Caco-2 (cell line): ENCODE measurements at regions of chr20 and their contacts with region 1.

Region 1: DNA sequence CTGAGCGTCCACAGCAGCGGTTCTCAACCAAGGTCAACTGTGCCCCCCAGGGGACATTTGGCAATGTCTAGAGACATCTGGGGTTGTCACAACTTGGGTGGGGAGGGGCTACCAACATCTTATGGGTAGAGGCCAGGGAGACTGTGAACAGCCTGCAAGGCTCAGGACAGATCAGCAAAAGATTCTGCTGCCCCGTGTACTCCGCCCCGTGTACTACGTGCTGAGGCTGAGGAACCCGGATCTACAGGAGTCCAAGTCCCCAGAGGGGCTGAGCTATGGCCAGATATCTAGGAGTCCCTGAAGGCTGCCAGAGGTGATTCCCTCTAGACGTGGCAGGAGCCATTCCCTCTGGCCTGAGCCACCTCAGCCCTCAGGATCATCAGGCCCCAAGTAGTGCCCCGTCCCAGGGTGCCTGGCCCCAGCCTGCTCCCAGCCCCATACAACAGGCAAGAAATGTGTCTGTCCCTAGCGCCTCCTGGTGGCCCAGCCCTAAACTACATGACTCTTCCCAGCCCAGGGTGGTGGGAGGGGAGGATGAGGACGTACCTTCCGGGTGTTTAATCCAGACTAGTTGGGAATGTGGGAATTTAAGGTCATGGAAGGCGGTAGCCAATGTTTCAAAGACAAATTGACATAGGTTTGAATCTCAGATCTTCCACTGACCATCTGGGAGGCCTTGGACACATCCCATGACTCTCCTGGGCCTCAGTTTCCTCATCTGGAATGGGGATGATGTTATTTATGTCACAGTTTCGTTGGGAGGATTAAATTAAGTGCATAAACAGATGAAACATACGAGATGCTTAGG is 49.5 kb upstream of the PTPN1 start:
- DNase-seq: peak; percentile 93 to 96
- H3K4me3 ChIP-seq: no peak overlapping the region
- H3K4me3 Mint-ChIP-seq: no peak overlapping the region
- H3K27ac Mint-ChIP-seq: peak overlapping the region; percentile 34
- H3K4me1 ChIP-seq: peaks cover 33% of the 10 kb centered on the region
- H3K4me1 Mint-ChIP-seq: peaks cover 31% of the 10 kb centered on the region
- H3K27me3 ChIP-seq: no peaks in the 10 kb centered on the region
- H3K27me3 Mint-ChIP-seq: no peaks in the 10 kb centered on the region
- CTCF ChIP-seq: peak; percentile 99 to 100

Region 2: DNA sequence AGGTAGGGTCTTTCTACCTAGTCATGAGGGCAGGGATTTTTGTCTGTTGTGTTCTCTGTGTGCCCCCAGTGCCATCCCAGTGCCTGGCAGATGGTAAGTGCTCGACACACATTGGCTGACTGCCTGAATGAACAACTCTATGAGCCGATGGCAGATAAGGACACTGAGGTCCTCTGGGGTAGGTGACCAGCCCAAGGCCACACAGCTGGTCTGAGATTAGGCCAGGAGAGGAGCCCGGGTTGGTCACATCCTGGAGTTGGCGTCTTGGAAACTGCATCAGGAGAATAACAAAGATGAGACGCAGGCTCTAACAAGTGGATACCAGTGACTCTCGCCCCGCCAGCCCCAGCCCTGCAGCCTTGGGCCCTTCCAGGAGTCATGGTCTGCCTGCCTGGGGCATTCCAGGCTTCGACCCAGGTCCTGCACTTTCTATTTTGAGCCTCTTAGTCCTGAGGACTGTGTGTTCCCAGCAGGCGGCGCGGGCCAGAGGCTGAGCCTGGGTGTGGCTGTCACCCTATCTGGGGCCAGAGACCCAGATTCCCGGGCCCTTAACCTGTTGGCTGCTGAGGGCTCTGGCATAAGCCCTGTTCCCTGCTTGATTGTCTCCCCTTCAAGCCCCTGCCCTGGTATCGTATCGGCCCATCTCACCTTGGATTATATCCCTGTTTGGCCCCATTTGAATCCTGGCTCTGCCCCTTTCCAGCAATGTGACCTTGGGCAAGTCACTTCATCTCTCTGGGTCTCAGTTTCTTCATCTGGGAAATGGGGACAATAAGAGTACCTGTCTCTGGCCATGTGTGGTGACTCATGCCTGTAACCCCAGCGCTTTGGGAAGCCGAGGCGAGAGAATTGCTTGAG is 181.8 kb before region 1 on chr20:
- CTCF ChIA-PET with region 1: no interaction called
- POLR2A ChIA-PET with region 1: no interaction called
- intact Hi-C with region 1: loop called (anchors 5 kb)
- DNase-seq: peak; percentile 64 to 82
- H3K4me3 ChIP-seq: no peak overlapping the region
- H3K4me3 Mint-ChIP-seq: no peak overlapping the region
- H3K27ac Mint-ChIP-seq: peak overlapping the region; percentile 5
- H3K4me1 ChIP-seq: peaks cover 34% of the 10 kb centered on the region
- H3K4me1 Mint-ChIP-seq: peaks cover 14% of the 10 kb centered on the region
- H3K27me3 ChIP-seq: no peaks in the 10 kb centered on the region
- H3K27me3 Mint-ChIP-seq: no peaks in the 10 kb centered on the region
- CTCF ChIP-seq: peak; percentile 19 to 49

Region 3: DNA sequence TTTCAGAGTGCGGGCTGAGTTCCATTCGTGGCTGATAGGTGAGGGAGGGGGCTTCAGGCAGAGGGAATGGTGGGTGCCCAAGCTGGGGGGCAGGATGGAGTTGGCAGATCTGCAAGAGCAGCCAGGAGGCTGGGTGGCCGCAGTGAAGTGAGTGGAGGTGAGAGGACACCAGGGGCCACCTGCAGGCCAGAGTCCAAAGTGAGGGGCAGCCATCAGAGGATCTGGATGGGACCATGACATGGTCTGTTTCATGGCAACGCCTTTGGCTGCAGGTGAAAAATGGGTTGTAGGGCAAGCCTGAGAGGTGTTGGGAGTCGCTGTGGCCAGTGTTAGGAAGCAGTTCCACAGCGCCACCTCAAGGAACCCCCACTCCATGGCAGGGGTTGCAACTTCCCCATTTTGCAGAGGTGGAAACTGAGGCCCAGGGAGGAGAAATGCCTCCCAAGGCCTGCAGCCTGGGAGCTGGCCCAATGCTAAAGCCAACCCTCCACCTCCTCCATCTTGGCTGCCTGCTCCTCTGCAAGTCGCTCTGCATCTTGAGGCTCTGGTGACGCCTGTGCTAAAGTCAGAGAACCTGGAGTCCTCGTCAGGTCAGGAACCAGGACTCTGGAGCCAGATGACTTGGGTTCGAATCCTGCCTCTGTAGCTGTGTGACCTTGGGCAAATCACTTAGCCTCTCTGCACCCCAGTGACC is 116.3 kb before region 1 on chr20:
- CTCF ChIA-PET with region 1: no interaction called
- POLR2A ChIA-PET with region 1: no interaction called
- intact Hi-C with region 1: no loop called
- DNase-seq: peak; percentile 54 to 69
- H3K4me3 ChIP-seq: no peak overlapping the region
- H3K4me3 Mint-ChIP-seq: no peak overlapping the region
- H3K27ac Mint-ChIP-seq: no peak overlapping the region
- H3K4me1 ChIP-seq: no peaks in the 10 kb centered on the region
- H3K4me1 Mint-ChIP-seq: no peaks in the 10 kb centered on the region
- H3K27me3 ChIP-seq: no peaks in the 10 kb centered on the region
- H3K27me3 Mint-ChIP-seq: no peaks in the 10 kb centered on the region
- CTCF ChIP-seq: peak; percentile 28 to 44

Region 4: DNA sequence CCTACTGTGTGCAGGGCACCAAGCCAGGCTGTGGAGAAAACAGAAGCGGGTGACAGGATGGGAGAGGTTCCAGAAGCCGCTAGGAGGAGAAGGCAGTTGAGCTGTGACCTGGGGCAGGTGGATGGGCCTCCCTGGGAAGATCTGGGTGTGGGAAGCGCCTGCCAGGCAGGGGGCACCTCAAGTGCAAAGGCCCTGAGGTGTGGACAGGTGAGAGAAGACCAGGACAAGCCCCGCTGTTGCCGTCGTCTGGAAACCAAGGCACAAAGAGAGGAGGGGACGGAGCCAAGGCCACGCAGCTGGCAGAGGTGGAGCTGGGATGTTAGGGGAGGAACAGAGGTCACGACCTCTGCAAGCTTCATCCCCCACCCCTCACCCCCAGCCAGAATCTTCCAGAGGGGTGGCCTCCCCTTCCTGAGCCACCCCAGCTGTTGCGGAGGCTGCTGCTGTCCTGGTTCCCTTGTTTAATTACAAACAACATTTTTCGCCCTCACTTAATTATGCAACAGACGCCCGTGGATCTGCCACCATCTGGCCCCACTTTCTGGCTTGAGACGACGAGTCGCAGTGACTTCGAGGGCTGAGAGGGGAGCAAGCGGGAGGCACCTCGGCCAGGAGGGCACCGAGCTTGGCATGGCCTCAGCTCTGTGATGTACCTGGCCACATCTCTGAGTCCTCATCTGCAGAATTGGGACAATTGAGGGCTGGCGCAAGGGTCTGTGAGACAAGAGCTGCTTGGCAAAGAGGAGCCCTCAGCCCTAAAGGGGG is 104.2 kb before region 1 on chr20:
- CTCF ChIA-PET with region 1: interaction called, 4 read pairs
- POLR2A ChIA-PET with region 1: no interaction called
- intact Hi-C with region 1: loop called (anchors 1 kb)
- DNase-seq: no peak
- H3K4me3 ChIP-seq: no peak overlapping the region
- H3K4me3 Mint-ChIP-seq: no peak overlapping the region
- H3K27ac Mint-ChIP-seq: no peak overlapping the region
- H3K4me1 ChIP-seq: peaks cover 41% of the 10 kb centered on the region
- H3K4me1 Mint-ChIP-seq: peaks cover 37% of the 10 kb centered on the region
- H3K27me3 ChIP-seq: no peaks in the 10 kb centered on the region
- H3K27me3 Mint-ChIP-seq: no peaks in the 10 kb centered on the region
- CTCF ChIP-seq: no peak

Region 5: GRCh38 chr20:50399917-50400704 is 60.6 kb before region 1 on chr20:
- CTCF ChIA-PET with region 1: interaction called, 6 read pairs
- POLR2A ChIA-PET with region 1: no interaction called
- intact Hi-C with region 1: loop called (anchors 1 kb)
- DNase-seq: peak; percentile 72 to 76
- H3K4me3 ChIP-seq: no peak overlapping the region
- H3K4me3 Mint-ChIP-seq: no peak overlapping the region
- H3K27ac Mint-ChIP-seq: peak overlapping the region; percentile 70
- H3K4me1 ChIP-seq: peaks cover 35% of the 10 kb centered on the region
- H3K4me1 Mint-ChIP-seq: peaks cover 32% of the 10 kb centered on the region
- H3K27me3 ChIP-seq: no peaks in the 10 kb centered on the region
- H3K27me3 Mint-ChIP-seq: no peaks in the 10 kb centered on the region
- CTCF ChIP-seq: no peak

Region 6: DNA sequence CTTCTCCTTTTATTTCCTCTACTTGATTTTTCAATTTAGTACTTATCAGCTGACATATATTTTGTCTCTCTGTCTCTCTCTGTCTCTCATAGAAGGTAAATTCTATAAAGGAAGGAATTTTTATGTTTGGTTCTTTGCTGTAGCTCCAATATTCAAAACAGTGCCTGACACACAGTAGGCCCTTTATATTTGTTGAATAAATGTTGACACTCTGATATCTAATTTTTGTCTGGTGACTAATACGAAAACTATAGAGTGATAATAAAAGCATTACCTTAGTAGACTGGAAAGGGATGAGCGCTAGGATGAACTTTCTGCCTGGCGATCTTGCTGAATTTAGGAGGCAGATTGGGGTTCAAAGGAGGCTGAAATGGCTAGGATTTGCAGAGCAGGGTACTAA is 92.3 kb after region 1 on chr20:
- CTCF ChIA-PET with region 1: no interaction called
- POLR2A ChIA-PET with region 1: no interaction called
- intact Hi-C with region 1: no loop called
- DNase-seq: no peak
- H3K4me3 ChIP-seq: no peak overlapping the region
- H3K4me3 Mint-ChIP-seq: no peak overlapping the region
- H3K27ac Mint-ChIP-seq: no peak overlapping the region
- H3K4me1 ChIP-seq: no peaks in the 10 kb centered on the region
- H3K4me1 Mint-ChIP-seq: no peaks in the 10 kb centered on the region
- H3K27me3 ChIP-seq: no peaks in the 10 kb centered on the region
- H3K27me3 Mint-ChIP-seq: no peaks in the 10 kb centered on the region
- CTCF ChIP-seq: no peak